Left cardiac atrium (tissue), 4 donors: ENCODE measurements at regions of chr15 and their contacts with region 1.

Region 1: DNA sequence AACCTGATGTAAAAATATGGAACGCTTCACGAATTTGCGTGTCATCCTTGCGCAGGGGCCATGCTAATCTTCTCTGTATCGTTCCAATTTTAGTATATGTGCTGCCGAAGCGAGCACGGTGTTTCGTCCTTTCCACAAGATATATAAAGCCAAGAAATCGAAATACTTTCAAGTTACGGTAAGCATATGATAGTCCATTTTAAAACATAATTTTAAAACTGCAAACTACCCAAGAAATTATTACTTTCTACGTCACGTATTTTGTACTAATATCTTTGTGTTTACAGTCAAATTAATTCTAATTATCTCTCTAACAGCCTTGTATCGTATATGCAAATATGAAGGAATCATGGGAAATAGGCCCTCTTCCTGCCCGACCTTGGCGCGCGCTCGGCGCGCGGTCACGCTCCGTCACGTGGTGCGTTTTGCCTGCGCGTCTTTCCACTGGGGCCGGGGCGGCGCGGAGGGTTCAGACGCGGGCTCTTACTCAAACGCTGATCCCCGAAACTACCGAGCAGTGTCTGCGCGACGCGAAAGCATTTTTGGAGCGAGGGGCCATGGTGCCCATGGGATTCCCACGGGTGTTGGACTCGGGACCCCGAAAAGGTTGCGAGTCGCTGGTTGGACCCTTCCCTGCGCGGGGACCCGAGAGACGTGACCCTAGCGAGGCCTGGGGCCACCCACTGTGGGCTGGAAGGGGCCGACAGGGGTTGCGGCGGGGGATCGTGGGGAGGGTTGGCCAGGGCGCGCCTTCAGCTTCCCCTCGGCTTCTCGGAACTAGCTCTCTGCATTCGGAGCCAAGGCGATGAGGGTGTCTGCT is at the start of gene RNU6-1:
- DNase-seq: peak; percentile 95
- ATAC-seq: peak; percentile 93
- total RNA-seq, gene RNU6-1: not detected

Region 2: DNA sequence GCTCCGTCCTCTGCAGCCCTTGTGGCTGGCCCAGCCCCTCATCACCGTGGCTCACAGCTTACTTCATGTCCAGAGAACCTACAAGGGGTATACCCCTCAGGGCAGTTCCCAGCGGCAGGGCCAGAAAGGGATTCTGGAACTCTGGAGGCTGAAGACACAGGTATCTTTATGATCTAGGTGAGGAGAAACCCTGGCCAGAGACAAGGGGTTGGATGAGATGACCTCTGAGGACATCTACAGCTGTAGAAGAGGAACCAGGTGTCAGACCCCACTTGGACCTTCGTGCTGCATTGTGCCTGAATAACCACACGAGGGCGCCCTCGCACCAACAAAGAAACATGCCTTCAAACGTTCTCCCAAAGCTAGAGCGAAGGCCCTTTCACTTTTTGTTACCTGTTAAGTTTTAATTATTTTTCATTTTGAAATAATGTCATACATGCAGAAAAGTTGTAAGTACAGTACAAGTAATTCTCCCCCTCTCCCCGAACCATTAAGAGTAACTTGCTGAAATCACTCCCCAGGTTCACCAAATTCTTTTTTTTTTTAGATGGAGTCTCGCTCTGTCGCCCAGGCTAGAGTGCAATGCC is 893.5 kb before region 1 on chr15:
- intact Hi-C with region 1: loop called in 1 of 2 experiments (anchors 10 kb)
- DNase-seq: peak; percentile 55
- ATAC-seq: peak; percentile 62 to 69

Region 3: GRCh38 chr15:67456677-67457529 is 383.2 kb before region 1 on chr15:
- intact Hi-C with region 1: loop called in 1 of 2 experiments (anchors 2 kb)
- DNase-seq: peak; percentile 86
- ATAC-seq: peak; percentile 88

Region 4: GRCh38 chr15:67501177-67501835 is 338.8 kb before region 1 on chr15:
- intact Hi-C with region 1: loop called in 1 of 2 experiments (anchors 10 kb)
- DNase-seq: no peak
- ATAC-seq: peak in 1 of 2 donors; percentile 44

Region 5: DNA sequence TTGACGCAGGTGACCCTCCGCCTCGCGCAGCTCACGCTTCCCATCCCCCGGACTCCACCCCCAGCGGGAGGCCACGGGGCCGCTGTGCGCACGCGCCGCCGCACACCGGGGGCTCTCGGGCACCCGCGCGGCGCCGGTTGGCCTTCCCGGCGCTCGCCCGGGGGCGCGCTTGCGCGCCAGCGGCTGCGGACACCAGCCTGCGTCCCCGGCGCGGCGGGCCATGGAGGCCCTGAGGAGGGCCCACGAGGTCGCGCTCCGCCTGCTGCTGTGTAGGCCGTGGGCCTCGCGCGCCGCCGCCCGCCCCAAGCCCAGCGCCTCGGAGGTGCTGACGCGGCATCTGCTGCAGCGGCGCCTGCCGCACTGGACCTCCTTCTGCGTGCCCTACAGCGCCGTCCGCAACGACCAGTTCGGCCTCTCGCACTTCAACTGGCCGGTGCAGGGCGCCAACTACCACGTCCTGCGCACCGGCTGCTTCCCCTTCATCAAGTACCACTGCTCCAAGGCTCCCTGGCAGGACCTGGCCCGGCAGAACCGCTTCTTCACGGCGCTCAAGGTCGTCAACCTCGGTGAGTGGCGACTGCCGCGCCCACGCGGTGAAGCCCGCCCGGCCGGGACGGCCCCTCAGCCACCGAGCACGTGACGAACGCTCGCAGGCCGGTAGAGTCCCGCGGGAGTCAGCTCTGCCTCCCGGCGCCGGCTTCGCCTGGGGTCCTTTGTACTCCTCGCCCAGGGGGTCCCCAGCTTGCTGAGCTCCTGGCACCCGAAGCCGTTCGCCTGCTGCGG is 318.9 kb before region 1 on chr15 and contains the start of gene C15orf61:
- intact Hi-C with region 1: loop called in 1 of 2 experiments (anchors 5 kb)
- DNase-seq: peak; percentile 87
- ATAC-seq: peak; percentile 93 to 94
- total RNA-seq, gene C15orf61: 9.8 to 10.1 TPM